ENCODE measurements at regions of chr12 and their contacts with region 1.

Region 1: GRCh38 chr12:69239352-69239921 is at the start of gene CPSF6:
- DNase-seq: peak; percentile 96
- ATAC-seq: peak; percentile 92 to 98 (median 93)
- H3K4me3 ChIP-seq: peak within 1 kb of the TSS; percentile 95
- H3K4me3 Mint-ChIP-seq: peak within 1 kb of the TSS; percentile 100
- H3K27ac ChIP-seq: peak within 1 kb of the TSS; percentile 91
- H3K27ac Mint-ChIP-seq: peak within 1 kb of the TSS; percentile 96 to 98
- H3K4me1 ChIP-seq: peaks cover 22% of the 10 kb centered on the region
- H3K4me1 Mint-ChIP-seq: peaks cover 40 to 48% of the 10 kb centered on the region in 2 donors
- H3K27me3 ChIP-seq: no peaks in the 10 kb centered on the region
- H3K27me3 Mint-ChIP-seq: no peaks in the 10 kb centered on the region
- CTCF ChIP-seq: no peak
- total RNA-seq, gene CPSF6: 88.5 to 99.4 (median 95.4) TPM

Region 2: DNA sequence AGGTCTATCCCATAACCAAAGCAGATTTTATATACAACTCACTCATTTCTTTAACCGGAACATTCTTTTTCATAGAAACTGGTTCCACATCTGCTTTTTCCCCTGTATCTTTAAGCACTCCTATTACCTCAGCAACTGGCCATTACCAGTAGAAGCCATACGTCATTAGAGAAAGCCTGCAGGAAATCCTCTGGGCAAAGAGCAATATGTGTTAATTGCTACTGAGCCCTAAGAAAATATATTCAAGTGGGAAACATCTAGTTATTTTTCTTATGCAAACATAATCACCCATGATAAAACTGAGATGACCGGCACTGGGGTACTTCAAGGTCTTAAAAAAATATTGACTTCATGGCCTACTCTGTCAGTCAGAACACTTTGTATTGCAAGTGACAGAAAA is 28.3 kb before region 1 on chr12:
- intact Hi-C with region 1: no loop called
- DNase-seq: no peak
- ATAC-seq: no peak
- H3K4me3 ChIP-seq: no peak overlapping the region
- H3K4me3 Mint-ChIP-seq: no peak overlapping the region
- H3K27ac ChIP-seq: no peak overlapping the region
- H3K27ac Mint-ChIP-seq: no peak overlapping the region
- H3K4me1 ChIP-seq: no peaks in the 10 kb centered on the region
- H3K4me1 Mint-ChIP-seq: no peaks in the 10 kb centered on the region
- H3K27me3 ChIP-seq: no peaks in the 10 kb centered on the region
- H3K27me3 Mint-ChIP-seq: peaks cover 5 to 11% of the 10 kb centered on the region in 2 donors
- CTCF ChIP-seq: no peak

Region 3: GRCh38 chr12:69254046-69254445 is 14.6 kb after region 1 on chr12:
- intact Hi-C with region 1: loop called (anchors 1 kb)
- DNase-seq: peak in 1 of 2 donors; percentile 83
- ATAC-seq: peak; percentile 88 to 91 (median 88)
- H3K4me3 ChIP-seq: no peak overlapping the region
- H3K4me3 Mint-ChIP-seq: no peak overlapping the region
- H3K27ac ChIP-seq: peak overlapping the region; percentile 18
- H3K27ac Mint-ChIP-seq: peak overlapping the region; percentile 32 to 66
- H3K4me1 ChIP-seq: no peaks in the 10 kb centered on the region
- H3K4me1 Mint-ChIP-seq: peaks cover 29 to 40% of the 10 kb centered on the region in 2 donors
- H3K27me3 ChIP-seq: no peaks in the 10 kb centered on the region
- H3K27me3 Mint-ChIP-seq: no peaks in the 10 kb centered on the region
- CTCF ChIP-seq: peak; percentile 72

Region 4: DNA sequence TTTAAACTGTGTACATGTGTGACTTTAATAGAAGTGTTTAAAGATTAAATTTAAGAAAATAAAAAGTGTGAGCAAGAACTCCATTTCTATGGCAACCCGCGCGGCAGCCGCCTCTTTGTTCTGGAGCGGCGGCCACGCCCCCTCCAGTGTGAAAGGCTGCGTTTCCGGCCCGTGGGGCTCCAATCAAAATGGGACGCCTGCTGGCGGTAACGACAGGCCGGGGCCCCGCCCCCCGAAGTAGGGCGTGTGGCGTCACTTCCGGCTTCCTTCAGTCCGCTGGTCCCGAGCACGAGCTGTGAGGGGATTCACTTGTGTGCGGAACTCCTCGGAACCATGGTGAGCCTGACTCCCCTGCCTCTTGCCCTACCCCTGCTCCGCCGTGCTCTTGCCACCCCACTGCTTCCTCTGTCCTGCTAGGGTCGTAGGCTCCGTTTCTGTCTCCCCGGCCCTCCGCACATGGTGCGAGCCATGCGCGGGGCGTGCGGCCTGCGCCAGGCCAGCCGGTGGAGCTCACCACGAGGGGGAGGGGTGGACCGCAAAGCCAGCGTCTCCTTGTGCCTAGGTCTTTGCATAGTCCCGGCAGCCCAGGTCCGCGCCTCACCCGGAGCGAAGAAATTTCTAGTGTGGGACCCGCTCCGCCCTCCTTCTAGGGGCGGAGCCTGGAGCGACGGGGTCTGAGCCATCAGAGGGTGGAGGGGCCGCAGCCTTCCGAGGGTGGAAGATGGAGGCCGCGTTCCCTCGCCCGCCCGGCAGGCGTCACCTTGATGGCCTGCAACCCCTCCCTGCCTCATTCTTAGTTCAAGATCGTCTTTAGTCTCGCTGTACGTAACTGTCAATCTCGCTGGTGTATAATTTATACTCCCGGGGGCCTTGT is 346.0 kb after region 1 on chr12 and contains the start of gene CCT2:
- intact Hi-C with region 1: loop called (anchors 1 kb)
- DNase-seq: peak; percentile 95 to 99
- ATAC-seq: peak; percentile 90 to 98 (median 93)
- H3K4me3 ChIP-seq: peak within 1 kb of the TSS; percentile 70
- H3K4me3 Mint-ChIP-seq: peak within 1 kb of the TSS; percentile 98
- H3K27ac ChIP-seq: peak within 1 kb of the TSS; percentile 79
- H3K27ac Mint-ChIP-seq: peak within 1 kb of the TSS; percentile 96 to 99
- H3K4me1 ChIP-seq: peaks cover 8% of the 10 kb centered on the region
- H3K4me1 Mint-ChIP-seq: peaks cover 8 to 9% of the 10 kb centered on the region in 2 donors
- H3K27me3 ChIP-seq: no peaks in the 10 kb centered on the region
- H3K27me3 Mint-ChIP-seq: no peaks in the 10 kb centered on the region
- CTCF ChIP-seq: peak; percentile 32
- total RNA-seq, gene CCT2: 154 to 171 (median 171) TPM

Region 5: DNA sequence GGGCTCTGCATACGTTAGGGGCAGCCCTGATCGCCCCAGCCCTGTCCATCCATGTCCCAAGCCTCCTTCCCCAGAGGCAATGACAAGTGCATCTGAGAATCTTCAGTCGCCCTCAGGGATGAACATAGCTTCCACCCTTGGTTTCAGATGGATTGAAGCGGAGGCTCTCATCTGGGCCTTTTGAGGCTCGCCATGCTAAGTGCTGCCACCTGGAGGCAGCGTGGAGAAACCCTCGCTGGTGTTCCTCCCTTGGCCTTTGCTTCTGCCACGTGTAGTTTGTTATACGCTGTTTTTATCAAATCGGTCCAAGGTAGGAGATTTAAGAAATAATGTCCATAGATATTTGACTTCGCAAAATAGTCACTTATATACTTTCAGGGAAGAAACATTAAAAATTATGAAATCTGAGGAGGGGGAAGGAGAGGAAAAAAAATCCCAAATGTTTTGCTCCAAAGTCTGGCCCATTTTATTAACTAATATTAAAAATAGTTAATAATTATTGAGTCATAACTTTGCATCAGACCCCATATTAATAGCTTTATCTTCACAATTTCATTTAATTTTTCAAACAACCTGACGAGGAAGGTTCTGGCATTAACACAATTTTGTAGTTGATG is 400.1 kb after region 1 on chr12:
- intact Hi-C with region 1: no loop called
- DNase-seq: peak; percentile 38 to 79
- ATAC-seq: peak; percentile 70 to 81 (median 76)
- H3K4me3 ChIP-seq: no peak overlapping the region
- H3K4me3 Mint-ChIP-seq: no peak overlapping the region
- H3K27ac ChIP-seq: no peak overlapping the region
- H3K27ac Mint-ChIP-seq: no peak overlapping the region
- H3K4me1 ChIP-seq: no peaks in the 10 kb centered on the region
- H3K4me1 Mint-ChIP-seq: no peaks in the 10 kb centered on the region
- H3K27me3 ChIP-seq: no peaks in the 10 kb centered on the region
- H3K27me3 Mint-ChIP-seq: peaks cover 0 to 3% of the 10 kb centered on the region in 2 donors
- CTCF ChIP-seq: peak; percentile 82